GM12878 (cell line): ENCODE measurements at regions of chr2 and their contacts with region 1.

Region 1: DNA sequence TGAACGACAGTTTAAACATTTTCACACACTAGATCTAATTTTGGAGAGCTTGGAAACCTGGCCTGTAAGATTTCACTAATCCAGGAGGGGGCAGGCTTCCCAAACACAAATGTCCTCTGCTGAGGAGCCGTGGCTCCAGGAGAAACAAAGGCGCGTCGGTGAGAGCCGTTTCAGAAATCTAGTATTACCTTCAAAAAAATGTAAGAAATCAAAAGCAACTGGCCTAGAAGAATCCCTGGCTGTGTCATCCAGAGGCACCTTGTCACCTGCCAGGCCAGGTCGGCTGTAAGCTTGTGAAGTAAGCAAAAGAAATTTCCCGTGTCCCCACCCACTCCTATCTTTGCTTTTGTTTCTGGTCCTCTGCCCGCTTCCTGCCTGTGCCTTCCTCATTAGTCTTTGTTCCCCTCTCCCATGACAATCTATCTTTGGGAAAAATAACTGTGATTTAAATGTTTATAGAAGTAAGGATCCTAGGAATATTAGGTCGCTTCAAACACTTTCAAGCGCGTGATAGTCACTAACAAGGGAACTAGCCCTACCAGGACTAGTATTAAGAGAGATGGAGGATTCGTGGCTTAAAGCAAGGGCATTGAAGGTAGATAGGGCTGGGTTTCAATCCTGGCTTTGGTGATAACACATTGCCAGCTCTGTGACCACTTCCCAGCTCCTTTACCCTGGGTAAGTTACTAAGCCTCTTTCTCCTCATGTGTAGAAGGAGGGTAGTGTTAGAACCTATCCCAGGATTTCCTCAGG is 99.5 kb upstream of the STK39 start:
- DNase-seq: peak; percentile 45
- ATAC-seq: peak; percentile 92
- H3K4me3 ChIP-seq: peak overlapping the region; percentile 52; the same call in 1 of the 2 replicates
- H3K27ac ChIP-seq: no peak overlapping the region
- H3K4me1 ChIP-seq: peaks cover 9% of the 10 kb centered on the region
- H3K27me3 ChIP-seq: no peaks in the 10 kb centered on the region
- CTCF ChIP-seq: peak; percentile 64 to 86 (median 69)
- EP300 ChIP-seq: no peak
- POLR2A ChIP-seq: no peak
- RAD21 ChIP-seq: peak; percentile 98

Region 2: DNA sequence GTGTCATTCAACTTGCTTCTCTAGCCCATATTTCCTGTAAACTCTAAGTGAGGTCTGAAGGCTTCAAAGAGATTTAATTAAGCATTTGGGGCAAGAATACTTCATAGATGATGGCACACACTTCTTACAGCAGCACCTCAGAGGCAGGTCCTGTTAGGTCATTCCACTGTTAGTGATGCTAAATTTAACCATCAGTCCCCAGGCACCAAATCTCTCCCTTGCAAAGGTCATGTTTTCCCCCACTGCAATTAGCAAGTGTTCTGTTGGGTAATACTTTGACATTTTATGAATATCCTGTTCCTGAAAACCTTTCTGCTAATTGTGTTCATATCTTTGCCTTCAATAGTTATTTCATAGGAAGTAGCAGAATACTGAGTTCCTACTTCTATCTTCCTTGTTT is 216.6 kb before region 1 on chr2:
- CTCF ChIA-PET with region 1: no interaction called
- POLR2A ChIA-PET with region 1: no interaction called
- RAD21 ChIA-PET with region 1: no interaction called
- SMC1A ChIA-PET with region 1: no interaction called
- in situ Hi-C with region 1: no loop called
- intact Hi-C with region 1: no loop called
- DNase-seq: no peak
- ATAC-seq: no peak
- H3K4me3 ChIP-seq: no peak overlapping the region
- H3K27ac ChIP-seq: no peak overlapping the region
- H3K4me1 ChIP-seq: no peaks in the 10 kb centered on the region
- H3K27me3 ChIP-seq: peaks cover 0 to 2% of the 10 kb centered on the region in 2 experiments; a peak in 1 of 4 replicates
- CTCF ChIP-seq: no peak
- EP300 ChIP-seq: no peak
- POLR2A ChIP-seq: no peak
- RAD21 ChIP-seq: no peak

Region 3: GRCh38 chr2:168357797-168358472 is 11.0 kb after region 1 on chr2:
- CTCF ChIA-PET with region 1: interaction called, 11 read pairs
- POLR2A ChIA-PET with region 1: no interaction called
- RAD21 ChIA-PET with region 1: interaction called, 6 read pairs
- SMC1A ChIA-PET with region 1: interaction called, 3 read pairs
- in situ Hi-C with region 1: no loop called
- intact Hi-C with region 1: no loop called
- DNase-seq: no peak
- ATAC-seq: peak; percentile 79
- H3K4me3 ChIP-seq: no peak overlapping the region
- H3K27ac ChIP-seq: no peak overlapping the region
- H3K4me1 ChIP-seq: peaks cover 8% of the 10 kb centered on the region
- H3K27me3 ChIP-seq: no peaks in the 10 kb centered on the region
- CTCF ChIP-seq: no peak
- EP300 ChIP-seq: no peak
- POLR2A ChIP-seq: no peak
- RAD21 ChIP-seq: no peak

Region 4: DNA sequence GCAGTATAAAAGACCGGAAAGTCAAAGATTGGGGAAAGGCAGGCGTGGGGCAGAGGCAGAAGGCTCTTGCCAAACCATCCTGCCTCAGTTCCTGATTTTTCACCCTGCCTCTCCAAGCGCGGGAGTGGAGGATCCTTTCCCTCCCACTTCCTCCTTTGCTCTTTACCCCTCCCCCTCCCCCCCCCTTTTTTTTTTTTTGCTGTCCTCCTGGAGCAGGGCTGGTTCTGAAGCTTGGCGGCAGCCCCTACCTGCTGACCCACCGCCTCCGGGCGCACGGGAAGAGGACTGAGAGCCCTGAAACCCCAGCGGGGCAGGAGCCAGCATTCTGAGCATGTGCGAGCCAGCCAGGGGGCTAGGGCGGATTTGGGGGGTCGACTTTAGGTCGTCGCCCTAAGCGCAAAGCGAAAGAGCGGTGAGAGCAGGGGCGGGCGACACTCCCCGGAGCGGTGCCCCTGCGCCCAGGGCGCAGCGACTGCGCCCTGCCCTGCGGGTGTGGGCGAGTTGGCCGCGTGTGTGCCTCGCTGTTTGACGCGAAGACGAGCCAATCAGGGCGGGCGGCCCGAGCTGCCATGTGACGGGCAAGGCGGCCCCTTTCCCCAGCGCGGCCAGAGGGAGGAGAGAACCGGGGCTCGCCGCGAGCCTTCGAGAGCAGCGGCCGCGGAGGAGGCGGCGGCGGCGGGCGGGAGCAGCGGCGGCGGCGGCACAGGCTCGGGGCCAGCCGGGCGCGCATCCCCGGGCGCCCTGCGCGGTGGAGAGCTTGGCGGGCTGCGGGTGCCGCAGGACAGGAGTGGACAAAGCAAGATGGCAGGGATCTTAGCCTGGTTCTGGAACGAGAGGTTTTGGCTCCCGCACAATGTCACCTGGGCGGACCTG is 109.0 kb after region 1 on chr2 and contains the start of gene CERS6:
- CTCF ChIA-PET with region 1: no interaction called
- POLR2A ChIA-PET with region 1: no interaction called
- RAD21 ChIA-PET with region 1: interaction called, 3 read pairs
- SMC1A ChIA-PET with region 1: no interaction called
- in situ Hi-C with region 1: no loop called
- intact Hi-C with region 1: loop called (anchors 2 kb)
- DNase-seq: peak; percentile 64
- ATAC-seq: peak; percentile 93
- H3K4me3 ChIP-seq: peak within 1 kb of the TSS; percentile 79
- H3K27ac ChIP-seq: peak within 1 kb of the TSS; percentile 91
- H3K4me1 ChIP-seq: peaks cover 13% of the 10 kb centered on the region
- H3K27me3 ChIP-seq: no peaks in the 10 kb centered on the region
- CTCF ChIP-seq: no peak
- EP300 ChIP-seq: no peak
- POLR2A ChIP-seq: peak; percentile 95
- RAD21 ChIP-seq: no peak
- polyA plus RNA-seq, gene CERS6: 1.3 to 2.5 TPM

Region 5: GRCh38 chr2:168614172-168615018 is 267.5 kb after region 1 on chr2:
- CTCF ChIA-PET with region 1: interaction called, 7 read pairs
- POLR2A ChIA-PET with region 1: no interaction called
- RAD21 ChIA-PET with region 1: no interaction called
- SMC1A ChIA-PET with region 1: interaction called, 4 read pairs
- in situ Hi-C with region 1: no loop called
- intact Hi-C with region 1: loop called (anchors 5 kb)
- DNase-seq: no peak
- ATAC-seq: peak; percentile 61
- H3K4me3 ChIP-seq: no peak overlapping the region
- H3K27ac ChIP-seq: no peak overlapping the region
- H3K4me1 ChIP-seq: no peaks in the 10 kb centered on the region; the same call in 1 of the 2 replicates
- H3K27me3 ChIP-seq: no peaks in the 10 kb centered on the region
- CTCF ChIP-seq: peak; percentile 20 to 30 (median 24); a peak in 3 of 6 replicates
- EP300 ChIP-seq: no peak
- POLR2A ChIP-seq: no peak
- RAD21 ChIP-seq: no peak

Region 6: GRCh38 chr2:168699844-168700417 is 353.0 kb after region 1 on chr2:
- CTCF ChIA-PET with region 1: interaction called, 40 read pairs
- POLR2A ChIA-PET with region 1: no interaction called
- RAD21 ChIA-PET with region 1: no interaction called
- SMC1A ChIA-PET with region 1: interaction called, 11 read pairs
- in situ Hi-C with region 1: loop called (anchors 5 kb)
- intact Hi-C with region 1: loop called (anchors 1 kb)
- DNase-seq: no peak
- ATAC-seq: no peak
- H3K4me3 ChIP-seq: no peak overlapping the region
- H3K27ac ChIP-seq: no peak overlapping the region
- H3K4me1 ChIP-seq: no peaks in the 10 kb centered on the region
- H3K27me3 ChIP-seq: no peaks in the 10 kb centered on the region
- CTCF ChIP-seq: no peak
- EP300 ChIP-seq: no peak
- POLR2A ChIP-seq: no peak
- RAD21 ChIP-seq: no peak

Region 7: DNA sequence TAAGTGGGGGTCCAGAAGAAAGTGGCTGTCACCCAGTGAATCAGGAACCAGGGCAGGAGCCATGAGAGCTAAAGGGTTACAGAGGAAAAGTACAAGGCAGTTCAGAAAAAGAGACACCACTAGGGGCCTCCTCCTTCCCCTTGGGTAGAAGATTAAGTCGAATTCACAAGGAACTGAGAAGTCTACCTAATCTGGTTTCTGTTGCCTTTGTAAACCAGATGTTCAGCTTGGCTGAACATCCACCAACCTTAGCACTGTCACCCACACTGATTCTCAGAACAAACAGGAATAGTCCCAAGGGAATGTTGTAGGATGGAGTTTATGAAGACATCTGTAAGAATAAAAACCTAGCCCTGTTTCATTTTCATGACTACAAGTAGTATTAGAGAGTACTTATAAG is 365.1 kb after region 1 on chr2:
- CTCF ChIA-PET with region 1: interaction called, 40 read pairs
- POLR2A ChIA-PET with region 1: no interaction called
- RAD21 ChIA-PET with region 1: interaction called, 11 read pairs
- SMC1A ChIA-PET with region 1: interaction called, 5 read pairs
- in situ Hi-C with region 1: no loop called
- intact Hi-C with region 1: no loop called
- DNase-seq: peak; percentile 91
- ATAC-seq: peak; percentile 97
- H3K4me3 ChIP-seq: no peak overlapping the region
- H3K27ac ChIP-seq: peak overlapping the region; percentile 62
- H3K4me1 ChIP-seq: peaks cover 16% of the 10 kb centered on the region
- H3K27me3 ChIP-seq: no peaks in the 10 kb centered on the region
- CTCF ChIP-seq: peak; percentile 38 to 52 (median 51); a peak in 5 of 6 replicates
- EP300 ChIP-seq: peak; percentile 62 to 78; a peak in 3 of 4 replicates
- POLR2A ChIP-seq: no peak
- RAD21 ChIP-seq: peak; percentile 47; the same call in 1 of the 2 replicates

Region 8: GRCh38 chr2:168912901-168913369 is 566.0 kb after region 1 on chr2:
- CTCF ChIA-PET with region 1: no interaction called
- POLR2A ChIA-PET with region 1: no interaction called
- RAD21 ChIA-PET with region 1: no interaction called
- SMC1A ChIA-PET with region 1: interaction called, 3 read pairs
- in situ Hi-C with region 1: loop called (anchors 5 kb)
- intact Hi-C with region 1: no loop called
- DNase-seq: no peak
- ATAC-seq: no peak
- H3K4me3 ChIP-seq: no peak overlapping the region
- H3K27ac ChIP-seq: no peak overlapping the region
- H3K4me1 ChIP-seq: no peaks in the 10 kb centered on the region
- H3K27me3 ChIP-seq: peaks cover 5 to 11% of the 10 kb centered on the region in 2 experiments; a peak in 3 of 4 replicates
- CTCF ChIP-seq: no peak
- EP300 ChIP-seq: no peak
- POLR2A ChIP-seq: no peak
- RAD21 ChIP-seq: no peak